Activated CD4-positive, alpha-beta memory T cell treated with anti-CD3 and anti-CD28 coated beads for 36 hours (primary cell): ENCODE measurements at regions of chr19 and their contacts with region 1.

Region 1: DNA sequence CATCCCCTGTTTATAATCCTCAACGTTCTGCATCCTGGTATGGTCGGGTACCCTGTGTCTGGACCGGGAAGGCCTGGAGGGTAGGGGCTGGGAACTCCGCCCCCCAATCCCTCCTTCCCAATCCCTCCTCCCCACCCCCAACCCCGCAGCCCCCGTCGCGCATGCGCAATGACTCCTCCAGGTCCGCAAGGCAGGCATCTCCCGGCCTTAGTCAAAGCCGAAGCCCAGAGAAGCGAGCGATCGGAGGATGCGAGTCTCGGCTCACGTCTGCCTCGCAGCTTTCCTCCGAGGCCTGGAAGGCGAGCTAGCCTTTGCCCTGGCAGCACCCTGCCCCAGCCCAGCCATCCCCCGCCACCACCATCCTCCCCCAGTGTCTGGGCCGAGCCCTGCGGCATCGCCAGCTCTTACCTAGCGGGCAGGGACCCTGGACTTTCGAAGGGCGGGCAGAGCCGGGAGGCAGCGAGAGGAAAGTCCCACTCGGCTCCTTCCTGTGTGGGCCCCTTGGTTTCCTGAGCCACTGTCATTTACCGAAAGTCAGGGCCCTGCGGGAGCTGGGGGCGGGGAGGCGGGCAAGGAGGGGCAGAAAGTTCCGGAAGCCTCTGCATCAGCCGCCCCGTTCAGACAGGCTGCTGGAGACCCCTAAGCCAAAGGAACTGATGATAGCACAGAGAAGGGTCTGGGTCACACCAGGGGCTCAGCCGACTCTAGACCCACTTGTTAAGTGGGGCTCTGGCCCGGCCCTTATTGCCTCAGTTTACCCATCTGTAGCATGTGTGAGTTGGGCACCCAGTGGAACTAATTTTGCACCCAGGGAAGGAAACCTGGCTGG is at the start of gene JAK3:
- DNase-seq: peak; percentile 96
- H3K4me3 Mint-ChIP-seq: peak within 1 kb of the TSS; percentile 93
- H3K27ac Mint-ChIP-seq: peak within 1 kb of the TSS; percentile 97
- H3K4me1 Mint-ChIP-seq: peaks cover 62% of the 10 kb centered on the region
- H3K27me3 Mint-ChIP-seq: peaks cover 2% of the 10 kb centered on the region
- total RNA-seq, gene JAK3: 200 to 217 TPM

Region 2: DNA sequence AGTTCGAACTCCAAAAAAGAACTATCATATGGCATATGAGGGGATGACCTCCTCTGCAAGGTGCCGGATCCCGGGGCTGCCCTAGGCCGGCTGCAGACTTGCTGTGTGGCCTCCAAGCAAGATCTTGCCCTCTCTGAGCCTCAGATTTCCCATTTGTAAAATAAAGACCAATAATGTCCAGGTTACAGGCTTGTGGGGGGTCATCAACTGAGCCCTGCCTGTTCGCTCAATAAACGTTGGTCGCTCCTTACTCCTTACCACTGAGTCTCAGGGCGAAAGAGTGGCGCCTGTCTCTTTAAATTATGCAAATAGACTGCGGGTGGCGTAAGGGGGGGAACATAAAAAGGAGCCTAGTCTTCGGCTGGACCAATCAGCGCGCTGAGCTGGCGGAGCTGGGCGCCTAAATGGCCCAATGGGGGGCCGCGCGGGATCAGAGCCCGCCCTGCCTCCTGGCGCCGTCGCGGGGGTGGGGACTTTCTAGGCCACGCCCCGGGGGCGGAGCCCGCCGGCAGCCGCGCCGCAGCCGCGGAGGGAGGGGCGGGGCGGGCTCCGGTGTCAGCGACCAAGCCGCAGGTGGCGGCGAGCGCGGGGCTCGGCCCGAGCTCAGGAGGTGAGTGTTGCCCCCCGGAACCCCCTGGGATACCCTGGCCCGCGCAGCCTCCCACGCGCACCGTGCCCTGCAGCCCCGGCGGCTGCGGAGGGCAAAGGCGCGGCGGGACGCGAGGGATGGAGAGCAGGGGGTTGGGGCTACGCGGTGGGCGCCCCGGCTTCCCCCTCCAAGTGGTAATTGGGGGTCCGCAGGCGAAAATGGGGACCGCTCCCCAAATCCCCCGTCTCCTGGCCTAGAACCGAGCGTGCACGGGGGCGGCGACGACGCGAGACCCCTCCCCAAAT is 100.3 kb before region 1 on chr19:
- CTCF ChIA-PET with region 1: no interaction called
- POLR2A ChIA-PET with region 1: interaction called, 11 read pairs
- intact Hi-C with region 1: no loop called
- DNase-seq: peak; percentile 97
- H3K4me3 Mint-ChIP-seq: peak overlapping the region; percentile 83
- H3K27ac Mint-ChIP-seq: peak overlapping the region; percentile 65
- H3K4me1 Mint-ChIP-seq: peaks cover 39% of the 10 kb centered on the region
- H3K27me3 Mint-ChIP-seq: no peaks in the 10 kb centered on the region

Region 3: GRCh38 chr19:17794731-17795536 is 52.8 kb before region 1 on chr19 and contains the start of gene B3GNT3:
- CTCF ChIA-PET with region 1: no interaction called
- POLR2A ChIA-PET with region 1: interaction called, 3 read pairs
- intact Hi-C with region 1: loop called (anchors 2 kb)
- DNase-seq: no peak
- H3K4me3 Mint-ChIP-seq: no peak within 1 kb of the TSS
- H3K27ac Mint-ChIP-seq: no peak within 1 kb of the TSS
- H3K4me1 Mint-ChIP-seq: peaks cover 53% of the 10 kb centered on the region
- H3K27me3 Mint-ChIP-seq: peaks cover 5% of the 10 kb centered on the region
- total RNA-seq, gene B3GNT3: 0.26 to 0.34 TPM

Region 4: GRCh38 chr19:17889609-17890214 is 42.0 kb after region 1 on chr19:
- CTCF ChIA-PET with region 1: no interaction called
- POLR2A ChIA-PET with region 1: no interaction called
- intact Hi-C with region 1: no loop called
- DNase-seq: peak; percentile 25
- H3K4me3 Mint-ChIP-seq: no peak overlapping the region
- H3K27ac Mint-ChIP-seq: no peak overlapping the region
- H3K4me1 Mint-ChIP-seq: no peaks in the 10 kb centered on the region
- H3K27me3 Mint-ChIP-seq: no peaks in the 10 kb centered on the region

Region 5: DNA sequence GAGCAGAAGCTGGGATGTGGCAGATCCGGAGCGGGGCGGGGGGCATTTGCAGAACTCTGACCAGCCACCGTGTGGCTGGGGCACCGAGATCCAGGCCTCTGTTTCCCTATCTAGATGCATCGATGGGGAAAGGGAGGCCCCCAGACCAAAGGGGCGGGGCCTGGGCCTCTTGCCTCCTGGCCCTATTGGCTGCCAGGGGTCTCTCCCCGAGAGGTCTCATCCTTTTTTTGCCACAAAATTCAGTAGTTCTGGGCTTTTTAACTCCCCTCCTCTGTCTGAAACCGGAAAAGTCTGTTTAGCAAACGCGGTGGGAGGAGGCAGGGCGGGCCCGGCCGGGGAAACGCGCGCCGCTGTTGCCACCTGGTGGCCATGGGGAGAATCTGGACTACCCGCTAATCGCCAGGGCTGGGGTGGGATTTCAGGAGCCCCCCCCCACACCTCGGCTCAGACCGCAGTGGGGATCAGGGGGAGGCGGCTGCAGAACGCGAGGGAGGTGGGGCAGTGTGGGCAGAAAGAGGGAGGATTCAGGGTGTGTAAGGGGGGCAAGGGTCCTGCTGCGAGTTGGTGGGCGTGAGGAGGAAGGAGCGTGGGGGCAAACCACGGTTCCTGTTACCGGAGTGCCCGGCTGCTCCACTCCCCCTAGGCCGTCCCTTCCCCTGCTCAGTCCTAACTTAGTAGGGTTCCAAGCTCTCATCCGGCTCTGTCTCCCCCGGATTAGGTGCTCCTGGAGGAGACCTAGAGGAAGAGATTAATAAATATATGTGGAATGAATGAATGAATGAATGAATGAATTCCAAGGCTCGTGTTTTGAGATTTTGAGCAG is 210.7 kb after region 1 on chr19:
- CTCF ChIA-PET with region 1: no interaction called
- POLR2A ChIA-PET with region 1: no interaction called
- intact Hi-C with region 1: no loop called
- DNase-seq: peak; percentile 87
- H3K4me3 Mint-ChIP-seq: peak overlapping the region; percentile 29
- H3K27ac Mint-ChIP-seq: peak overlapping the region; percentile 58
- H3K4me1 Mint-ChIP-seq: peaks cover 14% of the 10 kb centered on the region
- H3K27me3 Mint-ChIP-seq: no peaks in the 10 kb centered on the region